ENCODE measurements at regions of chr1 and their contacts with region 1.

Region 1: DNA sequence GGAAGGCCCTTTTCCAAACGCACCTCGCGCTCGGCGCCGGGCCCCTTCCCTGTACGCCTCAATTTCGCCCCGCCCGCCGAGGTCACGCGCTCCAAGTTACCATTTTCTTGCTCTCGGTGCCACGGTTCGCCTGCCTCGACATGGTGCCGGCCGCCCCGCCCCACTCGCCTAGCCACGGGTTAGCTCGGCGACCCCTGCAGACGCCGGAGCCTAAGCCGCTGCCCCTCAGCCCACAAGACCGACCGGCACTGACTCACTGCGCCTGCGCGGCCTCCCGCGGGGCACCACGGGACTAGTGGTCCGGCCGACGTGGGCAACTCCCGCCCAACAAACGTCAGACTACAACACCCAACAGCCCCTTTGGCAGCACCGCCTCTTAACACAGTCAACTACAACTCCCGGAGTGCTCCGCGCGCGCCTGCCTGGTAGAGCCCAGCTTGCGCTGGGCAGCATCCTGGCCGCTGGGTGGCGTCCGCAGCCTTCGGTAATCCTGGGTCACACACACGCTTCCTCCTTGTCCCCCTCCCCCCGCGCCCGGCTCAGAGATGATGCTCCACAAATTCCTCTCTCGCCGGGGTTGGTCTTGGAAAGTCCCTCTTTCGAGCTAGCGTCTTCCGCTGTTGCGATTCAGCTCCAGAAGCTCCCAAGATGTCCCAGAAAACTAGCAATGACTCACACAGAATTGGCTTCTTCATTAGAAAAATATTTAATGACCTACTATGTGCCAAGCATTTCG is at the start of gene TRAPPC3:
- DNase-seq: peak; percentile 95 to 100 (median 99)
- ATAC-seq: peak; percentile 92 to 96 (median 94)
- H3K4me3 ChIP-seq: peak within 1 kb of the TSS; percentile 88 to 96
- H3K4me3 Mint-ChIP-seq: peak within 1 kb of the TSS; percentile 98 to 99 (median 99)
- H3K27ac ChIP-seq: peak within 1 kb of the TSS; percentile 96
- H3K27ac Mint-ChIP-seq: peak within 1 kb of the TSS; percentile 97 to 98
- H3K4me1 ChIP-seq: peaks cover 33 to 54% of the 10 kb centered on the region in 2 experiments
- H3K4me1 Mint-ChIP-seq: peaks cover 72 to 79% (median 74%) of the 10 kb centered on the region in 3 donors
- H3K27me3 ChIP-seq: no peaks in the 10 kb centered on the region
- H3K27me3 Mint-ChIP-seq: no peaks in the 10 kb centered on the region
- total RNA-seq, gene TRAPPC3: 42.3 to 48.2 (median 44.6) TPM

Region 2: DNA sequence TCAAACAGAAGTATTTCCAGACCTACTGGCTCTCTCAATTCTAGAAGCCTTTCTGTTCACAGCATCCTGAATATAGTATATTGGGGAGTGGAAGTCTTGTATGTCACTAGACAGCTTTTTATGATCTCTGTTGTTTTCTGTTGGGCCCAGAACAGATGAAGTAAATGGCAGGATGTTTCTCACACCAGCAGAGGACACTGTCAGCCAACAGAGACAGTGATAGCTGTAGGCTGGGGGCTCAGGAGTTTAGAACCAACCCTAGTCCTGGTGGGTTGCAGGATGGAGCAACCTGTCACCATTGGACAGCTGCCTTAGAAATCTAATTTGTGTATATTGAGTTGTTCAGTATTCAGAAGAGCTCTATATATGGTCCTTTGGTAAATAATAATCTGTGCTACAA is 249.5 kb before region 1 on chr1:
- CTCF ChIA-PET with region 1: no interaction called
- POLR2A ChIA-PET with region 1: no interaction called
- DNase-seq: no peak
- ATAC-seq: no peak
- H3K4me3 ChIP-seq: no peak overlapping the region
- H3K4me3 Mint-ChIP-seq: no peak overlapping the region
- H3K27ac ChIP-seq: no peak overlapping the region
- H3K27ac Mint-ChIP-seq: no peak overlapping the region
- H3K4me1 ChIP-seq: no peaks in the 10 kb centered on the region
- H3K4me1 Mint-ChIP-seq: no peaks in the 10 kb centered on the region
- H3K27me3 ChIP-seq: no peaks in the 10 kb centered on the region
- H3K27me3 Mint-ChIP-seq: no peaks in the 10 kb centered on the region

Region 3: GRCh38 chr1:36085696-36086526 is 63.5 kb before region 1 on chr1:
- CTCF ChIA-PET with region 1: interaction called, 3 to 12 read pairs
- POLR2A ChIA-PET with region 1: interaction called in 1 of 2 experiments, 4 read pairs
- DNase-seq: no peak
- ATAC-seq: no peak
- H3K4me3 ChIP-seq: no peak overlapping the region
- H3K4me3 Mint-ChIP-seq: no peak overlapping the region
- H3K27ac ChIP-seq: no peak overlapping the region
- H3K27ac Mint-ChIP-seq: no peak overlapping the region
- H3K4me1 ChIP-seq: peaks cover 8 to 32% of the 10 kb centered on the region in 2 experiments
- H3K4me1 Mint-ChIP-seq: peaks cover 17 to 21% (median 21%) of the 10 kb centered on the region in 3 donors
- H3K27me3 ChIP-seq: peaks cover 0 to 56% of the 10 kb centered on the region in 2 experiments
- H3K27me3 Mint-ChIP-seq: peaks cover 23 to 43% of the 10 kb centered on the region in 2 donors

Region 4: GRCh38 chr1:36128126-36128904 is 21.1 kb before region 1 on chr1:
- CTCF ChIA-PET with region 1: no interaction called
- POLR2A ChIA-PET with region 1: no interaction called
- DNase-seq: no peak
- ATAC-seq: no peak
- H3K4me3 ChIP-seq: no peak overlapping the region
- H3K4me3 Mint-ChIP-seq: no peak overlapping the region
- H3K27ac ChIP-seq: no peak overlapping the region
- H3K27ac Mint-ChIP-seq: no peak overlapping the region
- H3K4me1 ChIP-seq: peaks cover 3 to 17% of the 10 kb centered on the region in 2 experiments
- H3K4me1 Mint-ChIP-seq: peaks cover 17 to 22% (median 20%) of the 10 kb centered on the region in 3 donors
- H3K27me3 ChIP-seq: peaks cover 0 to 32% of the 10 kb centered on the region in 2 experiments
- H3K27me3 Mint-ChIP-seq: peaks cover 22 to 25% of the 10 kb centered on the region in 2 donors

Region 5: GRCh38 chr1:36187800-36188593 is 38.6 kb after region 1 on chr1:
- CTCF ChIA-PET with region 1: interaction called, 18 to 80 read pairs
- POLR2A ChIA-PET with region 1: no interaction called
- DNase-seq: peak; percentile 62 to 91 (median 78)
- ATAC-seq: peak; percentile 96 to 98 (median 96)
- H3K4me3 ChIP-seq: no peak overlapping the region
- H3K4me3 Mint-ChIP-seq: no peak overlapping the region
- H3K27ac ChIP-seq: peak overlapping the region; percentile 52
- H3K27ac Mint-ChIP-seq: peak overlapping the region; percentile 85 to 89
- H3K4me1 ChIP-seq: peaks cover 0 to 9% of the 10 kb centered on the region in 2 experiments
- H3K4me1 Mint-ChIP-seq: peaks cover 6 to 9% (median 7%) of the 10 kb centered on the region in 3 donors
- H3K27me3 ChIP-seq: no peaks in the 10 kb centered on the region
- H3K27me3 Mint-ChIP-seq: no peaks in the 10 kb centered on the region

Region 6: GRCh38 chr1:36223993-36224536 is 74.7 kb after region 1 on chr1 and contains the start of gene THRAP3:
- CTCF ChIA-PET with region 1: interaction called in 1 of 2 experiments, 32 read pairs
- POLR2A ChIA-PET with region 1: interaction called in 1 of 2 experiments, 27 read pairs
- DNase-seq: peak; percentile 96 to 100 (median 100)
- ATAC-seq: peak; percentile 87 to 95 (median 92)
- H3K4me3 ChIP-seq: peak within 1 kb of the TSS; percentile 94 to 97
- H3K4me3 Mint-ChIP-seq: peak within 1 kb of the TSS; percentile 92 to 99 (median 96)
- H3K27ac ChIP-seq: peak within 1 kb of the TSS; percentile 99
- H3K27ac Mint-ChIP-seq: peak within 1 kb of the TSS; percentile 99 to 100
- H3K4me1 ChIP-seq: peaks cover 16 to 41% of the 10 kb centered on the region in 2 experiments
- H3K4me1 Mint-ChIP-seq: peaks cover 36 to 42% (median 41%) of the 10 kb centered on the region in 3 donors
- H3K27me3 ChIP-seq: no peaks in the 10 kb centered on the region
- H3K27me3 Mint-ChIP-seq: no peaks in the 10 kb centered on the region
- total RNA-seq, gene THRAP3: 75.2 to 111 (median 101) TPM

Region 7: DNA sequence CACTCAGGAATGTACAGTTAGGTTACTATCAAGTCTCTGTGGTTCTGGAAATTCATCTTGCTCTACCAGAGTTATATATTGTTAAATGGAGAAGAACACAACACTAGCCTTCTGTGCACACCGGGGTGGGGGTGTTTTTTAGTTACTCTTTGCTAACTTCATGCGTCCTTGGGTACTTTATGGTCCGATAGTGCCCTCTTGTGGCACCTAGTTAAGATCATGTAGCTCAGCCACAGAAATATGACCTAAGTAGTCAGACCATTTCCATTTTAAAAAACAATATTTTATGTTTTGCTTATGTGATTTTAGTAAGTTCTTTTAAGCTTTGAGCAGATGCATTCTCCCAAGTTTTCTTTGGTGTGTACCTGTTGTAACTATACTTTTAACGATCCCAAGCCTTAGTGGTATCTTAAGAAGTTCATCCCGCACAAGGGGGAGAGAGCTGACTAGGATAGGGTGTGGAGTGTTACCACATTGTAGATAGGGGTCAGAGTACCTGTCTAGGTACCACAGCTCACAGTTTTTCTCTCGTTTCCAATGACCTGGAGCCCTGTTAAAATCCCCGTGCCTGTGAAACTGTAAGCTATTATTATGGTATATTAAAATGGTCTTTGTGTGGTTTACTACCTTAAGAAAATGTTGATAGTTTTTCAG is 136.2 kb after region 1 on chr1:
- CTCF ChIA-PET with region 1: interaction called in 1 of 2 experiments, 49 read pairs
- POLR2A ChIA-PET with region 1: interaction called in 1 of 2 experiments, 5 read pairs
- DNase-seq: peak in 33 of 35 experiments; percentile 16 to 93 (median 62)
- ATAC-seq: peak; percentile 83 to 94 (median 90)
- H3K4me3 ChIP-seq: no peak overlapping the region
- H3K4me3 Mint-ChIP-seq: no peak overlapping the region
- H3K27ac ChIP-seq: peak overlapping the region; percentile 2
- H3K27ac Mint-ChIP-seq: peak overlapping the region; percentile 58 to 69
- H3K4me1 ChIP-seq: no peaks in the 10 kb centered on the region
- H3K4me1 Mint-ChIP-seq: peaks cover 15 to 22% (median 16%) of the 10 kb centered on the region in 3 donors
- H3K27me3 ChIP-seq: no peaks in the 10 kb centered on the region
- H3K27me3 Mint-ChIP-seq: no peaks in the 10 kb centered on the region